Right cardiac atrium (tissue), 5 donors: ENCODE measurements at regions of chr5 and their contacts with region 1.

Region 1: DNA sequence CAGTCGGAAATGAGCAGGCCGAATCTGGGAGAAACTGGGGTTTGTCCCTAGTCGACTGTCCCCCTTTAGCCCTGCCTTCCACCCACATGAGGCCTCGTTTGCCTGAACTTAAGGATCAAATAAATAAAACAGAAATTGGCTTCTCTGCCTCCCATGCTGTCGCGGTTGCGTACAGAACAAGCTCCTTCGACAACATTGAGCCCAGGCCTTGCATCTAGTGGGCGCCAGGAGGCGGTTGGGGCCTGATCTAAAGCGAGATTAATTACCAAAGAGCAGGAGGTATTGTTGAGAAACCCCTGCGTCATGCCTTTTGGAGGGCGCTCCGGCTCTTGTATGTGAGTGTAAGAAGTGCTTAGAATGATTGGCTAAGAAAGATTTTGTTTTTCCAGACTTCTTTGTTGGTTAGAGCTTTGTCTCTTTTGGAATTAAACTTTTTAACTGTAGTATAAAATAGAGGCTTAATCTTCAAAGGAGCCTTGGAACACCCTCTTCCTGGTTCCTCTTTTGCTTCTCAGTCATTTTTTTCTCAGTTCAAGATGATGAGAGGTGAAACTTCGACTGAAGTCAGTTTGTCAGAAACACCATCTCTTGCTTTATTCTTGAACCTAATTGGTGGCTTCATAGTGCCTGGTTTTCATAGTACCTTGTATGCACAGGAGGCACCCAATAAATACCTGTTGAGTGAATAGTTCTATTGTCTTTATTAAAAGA is 827 bp downstream of the ATP6V0E1 start:
- DNase-seq: peak; percentile 71 to 86 (median 75)
- ATAC-seq: peak; percentile 61 to 77
- H3K4me3 ChIP-seq: peak overlapping the region; percentile 95
- H3K27ac ChIP-seq: peak overlapping the region; percentile 98
- H3K4me1 ChIP-seq: peaks cover 2% of the 10 kb centered on the region
- H3K27me3 ChIP-seq: no peaks in the 10 kb centered on the region

Region 2: GRCh38 chr5:172839669-172840431 is 144.5 kb before region 1 on chr5:
- intact Hi-C with region 1: no loop called
- DNase-seq: no peak
- ATAC-seq: peak; percentile 14 to 21
- H3K4me3 ChIP-seq: no peak overlapping the region
- H3K27ac ChIP-seq: peak overlapping the region; percentile 25
- H3K4me1 ChIP-seq: peaks cover 7% of the 10 kb centered on the region
- H3K27me3 ChIP-seq: no peaks in the 10 kb centered on the region

Region 3: GRCh38 chr5:173057062-173057924 is 72.9 kb after region 1 on chr5:
- intact Hi-C with region 1: loop called in 1 of 4 experiments (anchors 10 kb)
- DNase-seq: peak; percentile 99 to 100 (median 99)
- ATAC-seq: peak; percentile 97 to 98
- H3K4me3 ChIP-seq: peak overlapping the region; percentile 97
- H3K27ac ChIP-seq: peak overlapping the region; percentile 92
- H3K4me1 ChIP-seq: no peaks in the 10 kb centered on the region
- H3K27me3 ChIP-seq: no peaks in the 10 kb centered on the region

Region 4: DNA sequence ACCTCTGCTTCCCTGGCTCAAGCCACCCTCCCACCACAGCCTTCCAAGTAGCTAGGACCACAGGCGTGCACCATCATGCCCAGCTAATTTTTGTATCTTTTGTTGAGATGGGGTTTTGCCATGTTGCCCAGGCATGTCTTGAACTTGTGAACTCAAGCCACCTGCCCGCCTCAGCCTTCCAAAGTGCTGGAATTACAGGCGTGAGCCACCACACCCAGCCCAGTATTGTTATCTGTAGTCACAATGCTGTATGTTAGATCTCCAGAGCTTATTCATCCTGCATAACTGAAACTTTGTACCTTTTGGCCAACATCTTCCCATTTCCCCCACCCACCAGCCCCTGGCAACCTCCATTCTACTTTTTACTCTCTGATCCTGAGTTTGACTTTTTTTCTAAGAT is 109.2 kb after region 1 on chr5:
- intact Hi-C with region 1: no loop called
- DNase-seq: no peak
- ATAC-seq: peak in 1 of 2 donors; percentile 63
- H3K4me3 ChIP-seq: no peak overlapping the region
- H3K27ac ChIP-seq: peak overlapping the region; percentile 20
- H3K4me1 ChIP-seq: peaks cover 5% of the 10 kb centered on the region
- H3K27me3 ChIP-seq: no peaks in the 10 kb centered on the region

Region 5: GRCh38 chr5:173138707-173139106 is 154.3 kb after region 1 on chr5:
- intact Hi-C with region 1: loop called in 1 of 4 experiments (anchors 10 kb)
- DNase-seq: no peak
- ATAC-seq: no peak
- H3K4me3 ChIP-seq: no peak overlapping the region
- H3K27ac ChIP-seq: no peak overlapping the region
- H3K4me1 ChIP-seq: no peaks in the 10 kb centered on the region
- H3K27me3 ChIP-seq: no peaks in the 10 kb centered on the region